ENCODE measurements at regions of chr12 and their contacts with region 1.

Region 1: GRCh38 chr12:120580787-120581723 is at the start of gene POP5:
- DNase-seq: peak; percentile 97 to 98
- ATAC-seq: peak; percentile 83
- total RNA-seq, gene POP5: 28.5 to 34.5 TPM

Region 2: DNA sequence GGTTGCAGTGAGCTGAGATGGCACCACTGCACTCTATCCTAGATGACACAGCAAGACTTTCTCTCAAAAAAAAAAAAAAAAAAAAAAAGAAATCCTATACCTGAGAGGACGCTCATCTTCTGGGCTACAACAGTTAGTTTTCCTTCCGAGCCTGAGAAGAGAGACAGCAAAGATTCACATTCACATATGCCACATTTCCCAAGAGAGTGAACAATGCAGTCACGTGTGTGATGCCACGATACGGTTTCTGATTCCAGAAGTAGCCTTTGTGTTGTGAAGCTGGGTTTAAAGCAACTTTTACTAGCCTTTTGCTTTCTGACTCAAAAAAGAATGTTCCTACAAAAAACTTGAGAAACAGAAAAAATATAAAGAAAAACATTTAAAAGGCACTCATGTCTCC is 406.0 kb before region 1 on chr12:
- intact Hi-C with region 1: no loop called
- DNase-seq: no peak
- ATAC-seq: no peak

Region 3: DNA sequence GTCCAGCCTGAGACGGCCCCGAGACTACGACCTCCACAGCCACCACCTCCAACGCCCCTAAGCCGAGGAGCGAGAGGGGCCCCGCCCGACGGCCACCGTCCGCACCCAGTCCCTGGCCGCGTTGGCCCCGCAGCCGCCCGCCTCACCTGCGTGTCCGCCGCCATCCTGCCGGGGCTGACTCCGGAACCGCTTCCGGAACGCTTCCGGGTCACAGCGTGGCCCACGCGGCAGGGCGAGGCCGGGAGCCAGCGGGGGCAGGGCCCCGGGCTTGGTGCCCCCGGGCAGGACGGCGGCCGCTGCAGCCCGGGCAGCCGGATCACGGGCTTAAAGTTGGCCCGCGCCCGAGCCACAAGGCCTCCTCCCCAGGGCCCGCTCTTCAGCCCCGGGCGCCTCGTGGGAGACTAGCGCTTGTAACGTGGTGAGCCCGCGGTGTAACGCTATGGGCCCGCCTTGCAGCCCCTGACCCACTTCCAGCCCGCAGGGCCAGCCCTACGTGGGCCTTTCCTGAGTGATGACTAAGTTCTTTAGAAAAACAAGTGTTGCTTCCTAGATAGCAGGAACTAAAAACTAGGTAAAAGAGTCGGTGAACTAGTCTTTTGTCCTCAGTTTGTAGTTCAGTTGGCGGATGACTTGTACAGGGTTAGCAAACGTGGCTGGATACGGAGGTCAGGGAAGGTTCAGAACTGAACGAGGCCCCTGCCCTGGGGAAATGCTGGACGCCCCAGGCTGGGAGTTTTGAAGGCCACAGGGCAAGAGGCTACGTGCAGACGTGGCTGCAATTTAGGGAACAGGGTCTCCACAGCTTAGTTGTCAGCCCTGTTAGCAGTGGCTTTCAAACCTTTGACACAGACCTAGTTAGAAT is 386.3 kb before region 1 on chr12 and contains the start of gene GCN1:
- intact Hi-C with region 1: no loop called
- DNase-seq: peak; percentile 76 to 88
- ATAC-seq: peak; percentile 93
- total RNA-seq, gene GCN1: 61.3 to 78.8 TPM

Region 4: GRCh38 chr12:120352117-120352516 is 228.9 kb before region 1 on chr12:
- intact Hi-C with region 1: no loop called
- DNase-seq: no peak
- ATAC-seq: no peak

Region 5: GRCh38 chr12:120640840-120641833 is 60.1 kb after region 1 on chr12:
- intact Hi-C with region 1: loop called in 1 of 2 experiments (anchors 10 kb)
- DNase-seq: peak; percentile 52 to 71
- ATAC-seq: peak; percentile 91

Region 6: GRCh38 chr12:120710031-120710804 is 129.2 kb after region 1 on chr12 and contains the start of gene UNC119B:
- intact Hi-C with region 1: loop called in 1 of 2 experiments (anchors 2 kb)
- DNase-seq: peak in 1 of 2 donors; percentile 82
- ATAC-seq: peak; percentile 81
- total RNA-seq, gene UNC119B: 15.1 to 27.5 TPM

Region 7: GRCh38 chr12:120971299-120972179 is 390.5 kb after region 1 on chr12:
- intact Hi-C with region 1: loop called in 1 of 2 experiments (anchors 10 kb)
- DNase-seq: no peak
- ATAC-seq: peak; percentile 59

Measured in left colon (tissue), 2 donors.